ENCODE measurements at regions of chr3 and their contacts with region 1.

Region 1: DNA sequence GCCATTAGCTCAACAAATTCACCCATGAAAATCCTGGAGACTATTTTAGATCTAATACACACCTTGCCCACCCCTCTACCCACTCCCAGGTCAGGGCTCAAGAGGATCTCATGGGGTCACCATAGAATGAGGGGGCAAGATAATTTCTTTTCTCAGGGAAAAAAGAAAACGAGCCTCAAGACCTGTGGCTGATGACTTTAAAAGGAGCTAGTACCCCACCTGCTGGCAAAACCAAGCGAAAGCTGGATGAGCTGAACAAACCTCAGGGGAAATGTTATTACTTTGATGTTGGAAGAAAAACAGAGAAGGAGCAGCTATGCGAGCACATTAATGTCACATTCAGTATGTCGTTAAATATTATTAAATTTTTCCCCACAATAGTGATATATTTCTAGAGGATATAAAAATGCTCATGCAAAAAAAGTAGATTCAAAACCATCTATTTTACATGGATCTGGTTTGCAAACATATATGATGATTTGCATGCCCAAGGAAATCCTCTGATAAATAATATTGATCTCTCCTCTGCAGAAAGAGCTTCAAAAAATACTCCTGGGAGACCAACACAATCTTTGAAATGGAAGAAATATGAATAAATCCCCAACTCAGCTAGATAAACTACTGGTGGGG is 37.7 kb downstream of the PLD1 start:
- DNase-seq: peak; percentile 61 to 78 (median 70)
- ATAC-seq: peak; percentile 50
- H3K4me3 ChIP-seq: no peak overlapping the region
- H3K27ac ChIP-seq: no peak overlapping the region
- H3K4me1 ChIP-seq: peaks cover 14% of the 10 kb centered on the region
- H3K27me3 ChIP-seq: no peaks in the 10 kb centered on the region
- CTCF ChIP-seq: peak; percentile 42 to 72 (median 68)
- POLR2A ChIP-seq: no peak

Region 2: DNA sequence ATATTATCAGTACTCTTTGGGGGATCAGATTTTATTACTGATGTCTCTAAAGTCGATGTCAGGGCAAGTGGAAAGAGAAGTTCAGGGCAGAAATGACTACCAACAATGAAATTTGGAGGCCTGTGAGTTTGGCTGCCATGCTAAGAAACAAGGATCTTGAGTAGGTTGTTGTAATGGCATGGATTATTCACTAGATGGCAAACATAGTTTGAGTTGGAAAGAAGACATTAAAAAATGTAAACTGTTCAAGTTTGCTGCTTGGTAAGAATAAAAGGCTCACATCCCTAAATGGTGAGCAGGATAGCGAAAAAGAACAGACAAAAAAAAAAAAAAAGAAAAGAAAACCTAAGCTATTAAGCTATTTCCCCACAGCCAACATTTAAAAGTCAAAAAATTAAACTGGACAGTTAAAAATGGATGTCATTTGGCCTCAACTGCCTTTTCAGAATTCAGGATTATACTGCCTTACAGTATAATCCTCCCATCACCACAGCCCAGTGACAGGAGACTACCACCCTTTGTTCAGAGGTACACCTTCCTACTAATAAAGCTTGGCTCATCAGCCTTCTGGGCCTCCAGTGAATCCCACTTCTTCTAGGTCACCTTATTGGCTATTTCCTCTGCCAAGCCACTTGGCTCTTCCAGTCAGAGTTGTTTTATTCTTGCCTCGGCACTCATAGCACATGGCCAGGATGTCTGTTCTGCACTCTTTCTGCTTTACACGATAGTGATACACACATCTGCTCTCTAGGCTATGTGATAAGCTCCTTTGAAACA is 126.0 kb before region 1 on chr3:
- intact Hi-C with region 1: loop called (anchors 10 kb)
- DNase-seq: no peak
- ATAC-seq: peak; percentile 60
- H3K4me3 ChIP-seq: no peak overlapping the region
- H3K27ac ChIP-seq: peak overlapping the region in 1 of 4 donors; percentile 34
- H3K4me1 ChIP-seq: no peaks in the 10 kb centered on the region
- H3K27me3 ChIP-seq: no peaks in the 10 kb centered on the region
- CTCF ChIP-seq: peak; percentile 15 to 68 (median 61)
- POLR2A ChIP-seq: no peak